ENCODE measurements at regions of chr6 and their contacts with region 1.

Region 1: DNA sequence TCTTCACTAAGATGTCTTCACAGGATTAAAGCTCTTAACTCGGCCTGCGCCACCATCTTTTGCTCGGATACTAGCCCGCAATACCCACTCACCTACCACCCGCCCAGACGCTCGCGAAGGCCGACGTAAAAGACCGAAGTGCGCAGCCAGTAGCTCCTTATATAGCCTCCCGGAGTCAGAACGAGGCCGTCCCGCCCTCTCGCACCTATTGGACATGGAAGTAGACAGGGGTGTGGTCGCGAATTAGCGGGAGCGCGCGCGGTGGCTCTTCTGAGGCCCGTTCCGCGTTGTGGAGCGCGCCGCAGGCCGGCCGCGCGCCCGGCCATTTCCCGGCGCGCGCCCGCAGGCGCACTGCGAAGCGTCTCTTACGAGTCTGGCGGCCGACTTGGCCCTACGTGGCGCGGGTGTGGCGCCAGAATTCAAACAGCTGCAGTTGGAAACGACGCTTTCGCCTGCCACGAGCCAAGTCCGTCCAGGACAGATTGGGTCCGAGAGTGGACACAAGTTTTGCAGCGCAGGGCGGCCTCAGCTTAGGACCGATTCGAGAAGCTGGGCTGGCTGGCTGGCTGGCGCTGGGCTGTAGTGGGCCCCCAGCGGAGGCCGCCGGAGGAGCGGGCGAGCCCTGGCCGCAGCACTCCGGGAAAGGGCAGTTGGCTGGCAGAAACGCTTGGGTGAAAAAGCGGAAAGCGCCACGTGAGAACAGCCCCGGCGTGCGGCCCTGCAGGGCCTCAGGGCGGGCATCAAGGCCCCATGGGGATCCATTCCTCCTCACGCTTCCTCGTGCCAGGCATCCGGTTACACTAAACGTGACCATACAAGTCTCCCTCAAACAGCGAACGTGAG is 36.1 kb upstream of the SYNCRIP start:
- DNase-seq: peak; percentile 97 to 100
- H3K4me3 ChIP-seq: peak overlapping the region; percentile 90 to 100 (median 96)
- H3K27ac ChIP-seq: peak overlapping the region; percentile 97
- H3K4me1 ChIP-seq: peaks cover 0 to 12% (median 2%) of the 10 kb centered on the region in 4 experiments; a peak in 2 of 7 replicates
- H3K27me3 ChIP-seq: no peaks in the 10 kb centered on the region
- CTCF ChIP-seq: no peak
- EP300 ChIP-seq: no peak; a peak in 1 of 3 replicates
- POLR2A ChIP-seq: peak; percentile 100
- RAD21 ChIP-seq: no peak

Region 2: DNA sequence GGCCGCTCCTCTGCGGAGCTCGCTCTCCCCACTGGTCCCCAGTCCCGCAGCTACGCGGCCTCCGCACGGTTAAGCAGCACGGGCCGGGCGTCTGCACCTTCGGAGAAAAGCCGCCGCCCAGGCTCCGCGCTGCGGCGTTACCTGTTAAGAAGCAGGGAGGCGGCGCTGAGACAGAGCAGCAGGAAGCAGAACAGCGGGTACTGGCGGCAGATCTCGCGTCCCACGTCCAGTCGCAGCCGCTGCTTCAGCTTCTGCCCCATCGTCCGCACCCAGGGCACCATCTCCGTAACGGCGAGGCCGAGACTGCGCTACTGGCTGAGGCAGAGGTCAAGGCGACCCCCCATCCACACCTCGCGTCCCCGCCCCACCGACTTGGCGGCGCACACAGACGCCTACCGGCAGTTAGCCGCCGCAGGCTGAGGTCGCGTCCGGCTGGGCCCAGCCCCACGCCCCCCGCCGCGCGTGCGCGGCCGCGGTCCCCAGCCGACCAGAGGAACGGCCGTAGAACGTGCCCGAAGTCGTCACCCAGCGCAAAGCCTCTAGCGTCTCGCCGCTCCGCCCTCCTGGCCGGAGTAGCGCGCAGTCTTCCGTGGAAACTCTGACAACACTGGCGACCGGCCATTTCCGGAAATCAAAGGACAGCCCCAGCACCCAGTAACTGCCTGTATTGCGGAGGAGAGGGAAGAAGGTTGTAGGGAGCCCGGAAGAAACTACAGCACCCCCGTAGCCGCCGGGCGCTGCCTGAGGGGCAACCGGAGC is 85.2 kb before region 1 on chr6 and contains the start of gene SNX14:
- CTCF ChIA-PET with region 1: no interaction called
- POLR2A ChIA-PET with region 1: interaction called, 55 read pairs
- DNase-seq: peak; percentile 50 to 87
- H3K4me3 ChIP-seq: peak within 1 kb of the TSS; percentile 77 to 87 (median 81)
- H3K27ac ChIP-seq: peak within 1 kb of the TSS; percentile 20; the same call in 1 of the 2 replicates
- H3K4me1 ChIP-seq: no peaks in the 10 kb centered on the region
- H3K27me3 ChIP-seq: no peaks in the 10 kb centered on the region; a peak in 2 of 7 replicates
- CTCF ChIP-seq: no peak; a peak in 1 of 4 replicates
- EP300 ChIP-seq: 0 out of 3 replicates have a peak, but pooled peaks of 1 of the 2 experiments have one; percentile 7
- POLR2A ChIP-seq: peak in 1 of 2 experiments; percentile 62; a peak in 1 of 3 replicates
- RAD21 ChIP-seq: no peak; a peak in 1 of 4 replicates
- total RNA-seq, gene SNX14: 24.2 and 29.6 TPM in 2 replicates

Region 3: GRCh38 chr6:85612690-85613474 is 65.9 kb before region 1 on chr6:
- CTCF ChIA-PET with region 1: no interaction called
- POLR2A ChIA-PET with region 1: interaction called, 52 read pairs
- DNase-seq: no peak
- H3K4me3 ChIP-seq: no peak overlapping the region
- H3K27ac ChIP-seq: no peak overlapping the region
- H3K4me1 ChIP-seq: no peaks in the 10 kb centered on the region
- H3K27me3 ChIP-seq: no peaks in the 10 kb centered on the region
- CTCF ChIP-seq: no peak
- EP300 ChIP-seq: no peak
- POLR2A ChIP-seq: peak in 1 of 2 experiments; percentile 12; a peak in 1 of 3 replicates
- RAD21 ChIP-seq: no peak

Region 4: GRCh38 chr6:85642774-85643536 is 35.9 kb before region 1 on chr6 and contains the start of gene SYNCRIP:
- CTCF ChIA-PET with region 1: interaction called, 18 read pairs
- POLR2A ChIA-PET with region 1: interaction called, 890 read pairs
- DNase-seq: peak; percentile 92 to 97
- H3K4me3 ChIP-seq: peak within 1 kb of the TSS; percentile 91 to 97 (median 96)
- H3K27ac ChIP-seq: peak within 1 kb of the TSS; percentile 99
- H3K4me1 ChIP-seq: peaks cover 0 to 9% (median 5%) of the 10 kb centered on the region in 4 experiments; a peak in 4 of 7 replicates
- H3K27me3 ChIP-seq: no peaks in the 10 kb centered on the region
- CTCF ChIP-seq: no peak
- EP300 ChIP-seq: 0 out of 3 replicates have a peak, but pooled peaks of 1 of the 2 experiments have one; percentile 56
- POLR2A ChIP-seq: peak; percentile 87 to 91
- RAD21 ChIP-seq: no peak
- total RNA-seq, gene SYNCRIP: 206 and 219 TPM in 2 replicates

Region 5: GRCh38 chr6:85691478-85691877 is 12.7 kb after region 1 on chr6:
- CTCF ChIA-PET with region 1: no interaction called
- POLR2A ChIA-PET with region 1: interaction called, 35 read pairs
- DNase-seq: no peak
- H3K4me3 ChIP-seq: no peak overlapping the region
- H3K27ac ChIP-seq: no peak overlapping the region
- H3K4me1 ChIP-seq: no peaks in the 10 kb centered on the region
- H3K27me3 ChIP-seq: no peaks in the 10 kb centered on the region
- CTCF ChIP-seq: no peak
- EP300 ChIP-seq: no peak
- POLR2A ChIP-seq: no peak
- RAD21 ChIP-seq: no peak

Region 6: DNA sequence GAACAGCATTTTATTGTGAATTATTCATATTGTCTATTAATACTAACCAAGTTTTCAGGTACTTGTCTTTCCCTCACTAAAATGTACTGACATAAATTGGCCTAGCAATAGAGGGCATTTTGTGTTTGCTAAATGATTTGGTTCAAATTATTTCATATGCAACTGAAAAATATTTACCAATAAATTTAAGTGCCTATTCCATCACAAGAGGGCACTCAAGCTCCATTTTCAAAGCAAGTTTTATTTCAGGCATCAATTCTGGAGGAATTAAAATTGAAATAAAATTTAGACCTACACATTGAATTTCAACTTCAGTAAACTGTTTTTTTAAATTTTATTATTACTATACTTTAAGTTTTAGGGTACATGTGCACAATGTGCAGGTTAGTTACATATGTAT is 78.2 kb after region 1 on chr6:
- CTCF ChIA-PET with region 1: no interaction called
- POLR2A ChIA-PET with region 1: no interaction called
- DNase-seq: no peak
- H3K4me3 ChIP-seq: no peak overlapping the region
- H3K27ac ChIP-seq: no peak overlapping the region
- H3K4me1 ChIP-seq: no peaks in the 10 kb centered on the region
- H3K27me3 ChIP-seq: no peaks in the 10 kb centered on the region
- CTCF ChIP-seq: peak in 2 of 3 experiments; percentile 25 to 34; a peak in 2 of 4 replicates
- EP300 ChIP-seq: no peak
- POLR2A ChIP-seq: no peak
- RAD21 ChIP-seq: peak; percentile 55 to 66

Region 7: GRCh38 chr6:85792254-85792653 is 113.4 kb after region 1 on chr6:
- CTCF ChIA-PET with region 1: no interaction called
- POLR2A ChIA-PET with region 1: no interaction called
- DNase-seq: no peak
- H3K4me3 ChIP-seq: no peak overlapping the region
- H3K27ac ChIP-seq: no peak overlapping the region
- H3K4me1 ChIP-seq: no peaks in the 10 kb centered on the region
- H3K27me3 ChIP-seq: no peaks in the 10 kb centered on the region
- CTCF ChIP-seq: no peak
- EP300 ChIP-seq: no peak
- POLR2A ChIP-seq: no peak
- RAD21 ChIP-seq: no peak